Ovary (tissue), 10 donors: ENCODE measurements at regions of chr12 and their contacts with region 1.

Region 1: GRCh38 chr12:79555028-79555930 is 135.5 kb downstream of the PAWR start:
- DNase-seq: no peak
- H3K4me3 ChIP-seq: no peak overlapping the region
- H3K27ac ChIP-seq: no peak overlapping the region
- H3K4me1 ChIP-seq: peaks cover 10% of the 10 kb centered on the region
- H3K27me3 ChIP-seq: no peaks in the 10 kb centered on the region
- CTCF ChIP-seq: peak; percentile 24 to 68 (median 63)
- EP300 ChIP-seq: no peak
- POLR2A ChIP-seq: no peak

Region 2: GRCh38 chr12:79329933-79330332 is 225.3 kb before region 1 on chr12:
- intact Hi-C with region 1: no loop called
- DNase-seq: no peak
- H3K4me3 ChIP-seq: no peak overlapping the region
- H3K27ac ChIP-seq: no peak overlapping the region
- H3K4me1 ChIP-seq: no peaks in the 10 kb centered on the region
- H3K27me3 ChIP-seq: no peaks in the 10 kb centered on the region
- CTCF ChIP-seq: no peak
- EP300 ChIP-seq: no peak
- POLR2A ChIP-seq: no peak

Region 3: DNA sequence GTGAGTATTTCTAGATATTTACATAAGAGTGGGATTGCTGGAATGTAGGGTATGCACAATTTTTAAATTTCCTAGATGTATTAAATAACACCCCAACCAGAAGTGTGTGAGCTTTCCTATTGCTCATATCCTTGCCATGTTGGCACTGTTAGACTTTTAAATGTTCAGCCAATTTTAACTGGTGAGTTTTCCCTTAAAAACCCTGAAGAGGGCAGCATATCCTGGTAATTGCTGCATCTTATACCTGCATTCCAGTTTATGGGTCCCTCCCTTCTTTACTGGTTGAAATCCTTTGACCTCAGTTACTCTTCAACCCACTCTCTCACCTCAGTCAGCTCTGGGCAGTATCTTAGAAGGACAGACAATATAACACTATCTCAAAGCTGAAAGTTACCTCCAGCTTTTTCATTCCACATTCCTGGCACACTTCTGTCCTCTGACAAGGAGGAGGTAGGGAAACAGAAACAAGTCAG is 135.1 kb before region 1 on chr12:
- intact Hi-C with region 1: loop called in 1 of 4 experiments (anchors 10 kb)
- DNase-seq: no peak
- H3K4me3 ChIP-seq: no peak overlapping the region
- H3K27ac ChIP-seq: peak overlapping the region in 1 of 2 donors; percentile 38
- H3K4me1 ChIP-seq: peaks cover 9% of the 10 kb centered on the region
- H3K27me3 ChIP-seq: no peaks in the 10 kb centered on the region
- CTCF ChIP-seq: peak in 2 of 3 donors; percentile 39 to 54
- EP300 ChIP-seq: no peak
- POLR2A ChIP-seq: no peak

Region 4: GRCh38 chr12:79690638-79691493 is 135.6 kb after region 1 on chr12 and contains the start of gene PAWR:
- intact Hi-C with region 1: loop called in 3 of 4 experiments (anchors 5 kb)
- DNase-seq: peak; percentile 71 to 83 (median 78)
- H3K4me3 ChIP-seq: peak within 1 kb of the TSS; percentile 65
- H3K27ac ChIP-seq: peak within 1 kb of the TSS; percentile 92 to 98
- H3K4me1 ChIP-seq: no peaks in the 10 kb centered on the region
- H3K27me3 ChIP-seq: no peaks in the 10 kb centered on the region
- CTCF ChIP-seq: peak in 1 of 3 donors; percentile 25
- EP300 ChIP-seq: no peak
- POLR2A ChIP-seq: peak; percentile 59
- total RNA-seq, gene PAWR: 46.8 to 125 (median 75.6) TPM

Region 5: GRCh38 chr12:80186727-80187217 is 631.5 kb after region 1 on chr12:
- intact Hi-C with region 1: loop called in 2 of 4 experiments (anchors 10 kb)
- DNase-seq: peak in 4 of 5 donors; percentile 26 to 81 (median 58)
- H3K4me3 ChIP-seq: no peak overlapping the region
- H3K27ac ChIP-seq: peak overlapping the region; percentile 17 to 66
- H3K4me1 ChIP-seq: peaks cover 2% of the 10 kb centered on the region
- H3K27me3 ChIP-seq: no peaks in the 10 kb centered on the region
- CTCF ChIP-seq: peak; percentile 64 to 78 (median 72)
- EP300 ChIP-seq: peak; percentile 54
- POLR2A ChIP-seq: no peak